ENCODE measurements at regions of chr2 and their contacts with region 1.

Region 1: GRCh38 chr2:172484253-172484652 is 56.9 kb downstream of the ITGA6 start:
- DNase-seq: no peak
- H3K4me3 ChIP-seq: no peak overlapping the region
- H3K27ac ChIP-seq: no peak overlapping the region
- H3K27me3 ChIP-seq: no peaks in the 10 kb centered on the region
- CTCF ChIP-seq: peak in 38 of 56 donors; percentile 12 to 60 (median 30)

Region 2: GRCh38 chr2:172507199-172507598 is 22.9 kb after region 1 on chr2:
- intact Hi-C with region 1: loop called in 1 of 2 experiments (anchors 2 kb)
- DNase-seq: no peak
- H3K4me3 ChIP-seq: no peak overlapping the region
- H3K27ac ChIP-seq: no peak overlapping the region
- H3K27me3 ChIP-seq: no peaks in the 10 kb centered on the region
- CTCF ChIP-seq: no peak